ENCODE measurements at regions of chr4 and their contacts with region 1.

Region 1: GRCh38 chr4:112636688-112637551 is at the starts of genes LARP7 and ZGRF1:
- DNase-seq: peak; percentile 93 to 99 (median 98)
- H3K4me3 ChIP-seq: peak within 1 kb of the TSS; percentile 49 to 96 (median 78)
- H3K27ac ChIP-seq: peak within 1 kb of the TSS; percentile 86 to 100 (median 98)
- H3K27me3 ChIP-seq: no peaks in the 10 kb centered on the region
- CTCF ChIP-seq: peak; percentile 37 to 99 (median 82)
- total RNA-seq, gene LARP7: 20.0 to 45.1 (median 31.6) TPM
- total RNA-seq, gene ZGRF1: 6.6 to 28.0 (median 14.5) TPM

Region 2: DNA sequence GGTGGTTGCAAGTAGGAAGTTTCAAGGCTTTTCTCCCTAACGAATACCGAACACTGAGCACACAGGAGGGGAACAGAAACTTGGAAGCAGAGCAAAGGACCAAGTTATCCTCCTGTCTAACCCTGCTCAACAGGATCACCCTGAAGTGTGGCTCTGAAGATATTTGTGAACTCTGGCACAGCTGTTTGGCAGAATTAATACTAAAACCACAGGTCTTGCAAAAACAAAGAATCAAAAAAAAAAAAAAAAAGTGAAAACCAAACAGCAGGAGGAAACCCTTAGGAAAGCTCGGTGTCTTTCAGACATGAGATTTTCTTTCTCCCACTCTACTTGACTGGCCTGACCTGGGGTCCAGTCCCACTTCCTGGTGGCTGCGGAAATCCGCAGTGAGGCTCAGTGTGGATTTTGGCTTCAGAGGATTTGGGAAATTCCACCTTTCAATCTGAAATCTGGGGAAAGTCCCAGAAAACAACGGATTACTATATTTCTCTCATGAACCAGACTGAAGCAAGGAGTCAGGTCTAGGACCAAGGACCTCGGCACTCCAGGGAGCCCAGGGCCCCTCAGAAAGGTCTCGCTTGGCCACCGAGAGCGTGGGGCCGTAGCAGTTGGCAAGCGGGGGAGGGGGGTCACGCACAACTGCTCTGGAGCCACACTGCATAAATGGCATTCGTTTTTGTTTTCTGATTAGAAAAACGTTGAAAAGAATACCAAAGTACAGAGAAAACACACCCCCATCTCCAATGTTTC is 352.1 kb before region 1 on chr4:
- intact Hi-C with region 1: no loop called
- DNase-seq: no peak
- H3K4me3 ChIP-seq: peak overlapping the region; percentile 53 to 92 (median 78)
- H3K27ac ChIP-seq: peak overlapping the region in 46 of 59 donors; percentile 11 to 87 (median 68)
- H3K27me3 ChIP-seq: no peaks in the 10 kb centered on the region
- CTCF ChIP-seq: no peak

Region 3: GRCh38 chr4:112817933-112818593 is 181.1 kb after region 1 on chr4:
- intact Hi-C with region 1: loop called in 1 of 2 experiments (anchors 5 kb)
- DNase-seq: peak; percentile 54 to 97 (median 93)
- H3K4me3 ChIP-seq: peak overlapping the region; percentile 48 to 90 (median 75)
- H3K27ac ChIP-seq: peak overlapping the region; percentile 54 to 96 (median 89)
- H3K27me3 ChIP-seq: no peaks in the 10 kb centered on the region
- CTCF ChIP-seq: peak in 41 of 56 donors; percentile 7 to 67 (median 35)